K562 (cell line): ENCODE measurements at regions of chr16 and their contacts with region 1.

Region 1: DNA sequence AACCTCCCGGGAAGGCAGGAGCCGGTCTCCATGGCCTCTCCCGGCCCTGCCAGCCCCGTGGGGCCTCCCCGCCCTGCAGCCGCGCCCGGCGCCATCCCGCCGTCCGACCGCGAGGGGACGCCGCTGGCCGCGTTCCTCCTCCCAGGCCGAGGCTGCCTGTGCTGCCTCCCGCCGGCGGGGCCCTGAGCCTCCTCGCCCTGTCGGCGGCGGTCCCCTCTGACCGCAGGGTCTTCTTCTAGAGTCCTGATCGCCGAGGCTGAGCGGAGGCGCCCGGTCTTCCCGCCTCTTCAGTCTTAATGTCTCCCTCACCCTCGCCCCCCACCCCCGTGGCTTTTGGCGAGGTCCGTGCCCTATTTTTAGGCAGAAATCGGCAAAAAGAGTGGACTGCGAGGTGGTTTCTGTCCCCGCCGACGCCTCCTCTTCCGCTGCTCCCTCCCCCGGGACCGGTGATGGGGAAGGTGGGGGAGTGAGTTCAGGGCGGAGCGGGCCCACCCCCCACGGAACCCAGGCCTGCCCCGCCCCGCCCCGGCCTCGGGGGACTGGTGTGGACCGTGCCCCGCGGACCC is 794 bp upstream of the CPNE7 start:
- DNase-seq: peak; percentile 86 to 93 (median 87)
- ATAC-seq: peak; percentile 95
- H3K4me3 ChIP-seq: peak overlapping the region; percentile 57
- H3K27ac ChIP-seq: peak overlapping the region; percentile 72
- H3K4me1 ChIP-seq: peaks cover 5 to 65% of the 10 kb centered on the region in 2 experiments
- H3K27me3 ChIP-seq: no peaks in the 10 kb centered on the region
- CTCF ChIP-seq: peak; percentile 87 to 99 (median 97)
- EP300 ChIP-seq: no peak
- POLR2A ChIP-seq: peak; percentile 73; the same call in 1 of the 2 replicates
- RAD21 ChIP-seq: peak; percentile 86 to 92

Region 2: DNA sequence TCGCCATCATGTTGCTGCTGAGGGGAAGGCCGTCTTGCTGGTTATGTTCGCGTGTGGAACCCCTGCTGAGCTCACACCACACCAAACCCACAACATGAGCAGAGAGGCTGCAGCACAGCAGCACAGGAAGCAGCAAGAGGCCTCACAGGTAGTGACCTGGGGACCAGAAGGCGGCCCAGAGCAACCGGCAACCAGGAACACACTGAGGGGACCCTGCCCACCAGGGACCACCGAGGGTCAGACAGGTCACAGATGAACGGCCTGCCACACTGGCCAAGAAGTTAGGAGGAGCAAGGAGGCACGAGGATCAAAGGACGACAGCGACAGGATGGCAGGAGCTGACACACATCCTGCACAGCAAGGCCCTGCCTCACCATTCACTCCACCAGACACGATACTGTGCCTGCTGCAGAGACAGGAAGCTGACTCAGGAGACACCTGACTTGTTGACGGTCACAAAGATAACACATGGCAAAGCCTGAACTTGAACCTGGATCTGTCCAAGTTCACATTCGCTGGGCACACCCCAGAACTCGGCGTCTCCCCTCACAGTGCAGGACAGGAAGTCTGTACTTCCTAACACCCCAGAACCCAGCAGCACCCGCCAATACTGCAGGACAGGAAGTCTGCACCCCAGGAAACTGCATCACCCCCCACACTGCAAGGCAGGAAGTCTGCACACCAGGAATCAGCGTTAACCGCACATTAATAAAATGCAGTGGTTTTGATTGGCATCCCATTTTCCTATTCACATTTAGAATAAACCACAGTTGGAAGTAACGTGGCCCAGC is 258.8 kb before region 1 on chr16:
- CTCF ChIA-PET with region 1: no interaction called
- POLR2A ChIA-PET with region 1: no interaction called
- in situ Hi-C with region 1: no loop called
- intact Hi-C with region 1: no loop called
- DNase-seq: peak in 2 of 4 experiments; percentile 33 to 63
- ATAC-seq: no peak
- H3K4me3 ChIP-seq: no peak overlapping the region
- H3K27ac ChIP-seq: peak overlapping the region; percentile 46; the same call in 2 of the 3 replicates
- H3K4me1 ChIP-seq: peaks cover 43 to 74% of the 10 kb centered on the region in 2 experiments
- H3K27me3 ChIP-seq: no peaks in the 10 kb centered on the region
- CTCF ChIP-seq: no peak
- EP300 ChIP-seq: no peak; the same call in 1 of the 2 replicates
- POLR2A ChIP-seq: no peak
- RAD21 ChIP-seq: no peak

Region 3: DNA sequence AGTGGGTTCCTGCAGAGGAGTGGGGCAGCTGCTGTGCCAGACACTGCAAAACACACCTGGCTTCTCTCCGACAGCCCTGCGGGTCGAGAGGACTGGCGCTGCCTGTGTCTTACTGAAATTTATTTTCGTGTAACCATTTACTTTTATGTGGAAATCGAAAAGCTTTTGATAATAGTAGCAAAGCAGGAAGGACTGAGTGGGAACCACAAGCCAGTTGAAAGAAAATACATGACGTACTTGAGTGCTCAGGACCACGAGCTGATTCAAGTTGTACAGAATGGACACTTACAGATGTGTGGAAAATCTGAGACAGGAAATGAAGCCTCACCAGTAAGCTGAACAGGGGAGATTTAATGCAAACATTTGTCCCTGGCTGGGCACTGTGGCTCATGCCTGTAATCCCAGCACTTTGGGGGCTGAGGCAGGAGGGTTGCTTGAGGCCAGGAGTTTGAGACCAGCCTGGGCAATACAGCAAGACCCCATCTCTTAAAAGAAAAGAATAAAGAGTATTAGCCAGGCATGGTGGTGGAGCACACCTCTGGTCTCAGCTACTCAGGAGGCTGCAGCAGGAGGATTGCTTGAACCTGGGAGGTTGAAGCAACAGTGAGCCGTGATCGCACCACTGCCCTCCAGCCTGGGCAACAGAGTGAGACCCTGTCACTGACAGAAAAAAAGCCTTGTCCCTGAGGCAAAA is 25.6 kb before region 1 on chr16:
- CTCF ChIA-PET with region 1: no interaction called
- POLR2A ChIA-PET with region 1: no interaction called
- in situ Hi-C with region 1: no loop called
- intact Hi-C with region 1: no loop called
- DNase-seq: no peak
- ATAC-seq: no peak
- H3K4me3 ChIP-seq: no peak overlapping the region
- H3K27ac ChIP-seq: no peak overlapping the region
- H3K4me1 ChIP-seq: peaks cover 0 to 2% of the 10 kb centered on the region in 2 experiments; a peak in 1 of 5 replicates
- H3K27me3 ChIP-seq: no peaks in the 10 kb centered on the region
- CTCF ChIP-seq: no peak
- EP300 ChIP-seq: no peak
- POLR2A ChIP-seq: no peak
- RAD21 ChIP-seq: no peak

Region 4: DNA sequence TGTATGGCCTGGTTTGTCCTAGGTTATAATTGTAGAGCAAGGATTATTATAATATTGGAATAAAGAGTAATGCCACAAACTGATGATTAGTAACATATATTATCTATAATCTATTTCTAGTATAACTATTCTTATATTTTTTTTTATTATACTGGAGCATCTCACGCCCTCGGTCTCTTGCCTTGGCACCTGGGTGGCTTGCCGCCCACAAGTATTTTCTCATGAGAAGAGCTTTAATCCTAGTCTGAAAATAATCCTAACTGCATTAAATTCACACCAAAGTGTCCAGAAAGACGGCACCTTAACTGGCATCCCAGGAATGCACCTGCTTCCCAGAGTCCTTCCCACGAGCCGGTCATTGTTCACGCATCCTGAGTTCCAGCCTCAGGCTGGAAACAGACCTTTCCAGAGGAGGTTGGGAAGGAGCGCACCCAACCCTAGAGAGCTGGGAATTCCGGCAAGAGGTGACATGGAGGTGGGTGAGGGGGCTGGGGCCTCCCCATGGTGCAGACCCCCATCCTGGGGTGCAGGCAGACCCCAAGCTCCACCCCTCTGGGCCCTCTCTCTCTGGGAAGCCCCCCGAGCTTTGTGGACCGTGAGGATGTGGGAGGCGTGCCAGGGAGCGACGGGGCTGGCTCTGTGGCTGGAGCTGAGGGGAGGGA is 66.8 kb after region 1 on chr16:
- CTCF ChIA-PET with region 1: interaction called, 8 read pairs
- POLR2A ChIA-PET with region 1: no interaction called
- in situ Hi-C with region 1: no loop called
- intact Hi-C with region 1: loop called (anchors 10 kb)
- DNase-seq: no peak
- ATAC-seq: no peak
- H3K4me3 ChIP-seq: no peak overlapping the region
- H3K27ac ChIP-seq: no peak overlapping the region
- H3K4me1 ChIP-seq: peaks cover 0 to 58% of the 10 kb centered on the region in 2 experiments; a peak in 3 of 5 replicates
- H3K27me3 ChIP-seq: no peaks in the 10 kb centered on the region; a peak in 1 of 5 replicates
- CTCF ChIP-seq: 0 out of 6 replicates have a peak, but pooled peaks of 1 of the 3 experiments have one; percentile 0
- EP300 ChIP-seq: no peak
- POLR2A ChIP-seq: no peak
- RAD21 ChIP-seq: no peak

Region 5: DNA sequence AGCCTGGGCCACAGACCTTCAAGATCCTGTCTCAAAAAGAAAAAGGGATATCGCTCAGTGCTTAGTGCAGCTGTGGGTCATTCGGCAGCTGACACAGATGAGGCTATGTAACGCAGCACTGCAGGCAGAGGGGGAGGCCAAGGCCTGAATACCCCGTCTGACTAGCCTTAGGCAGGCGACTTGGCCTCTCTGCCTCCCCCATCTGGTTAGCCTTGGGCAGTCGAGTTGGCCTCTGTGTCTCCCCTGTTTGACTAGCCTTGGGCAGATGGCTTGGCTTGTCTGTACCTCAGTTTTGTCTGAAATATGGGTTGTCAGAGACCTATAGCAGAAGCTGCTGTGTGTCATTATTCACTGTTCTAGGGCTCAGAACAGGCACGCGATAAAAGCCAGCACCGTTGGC is 92.9 kb after region 1 on chr16:
- CTCF ChIA-PET with region 1: interaction called, 4 read pairs
- POLR2A ChIA-PET with region 1: no interaction called
- in situ Hi-C with region 1: no loop called
- intact Hi-C with region 1: loop called (anchors 2 kb)
- DNase-seq: peak in 1 of 4 experiments; percentile 13
- ATAC-seq: peak; percentile 55
- H3K4me3 ChIP-seq: no peak overlapping the region
- H3K27ac ChIP-seq: no peak overlapping the region
- H3K4me1 ChIP-seq: peaks cover 3 to 19% of the 10 kb centered on the region in 2 experiments; a peak in 3 of 5 replicates
- H3K27me3 ChIP-seq: no peaks in the 10 kb centered on the region
- CTCF ChIP-seq: 0 out of 6 replicates have a peak, but pooled peaks of 1 of the 3 experiments have one; percentile 17
- EP300 ChIP-seq: no peak
- POLR2A ChIP-seq: no peak
- RAD21 ChIP-seq: no peak